ENCODE measurements at regions of chr12 and their contacts with region 1.

Region 1: GRCh38 chr12:92136965-92137721 is 8.5 kb downstream of the BTG1 start:
- DNase-seq: no peak
- H3K4me3 Mint-ChIP-seq: peak overlapping the region; percentile 100
- H3K27ac Mint-ChIP-seq: peak overlapping the region; percentile 91
- H3K4me1 Mint-ChIP-seq: peaks cover 65% of the 10 kb centered on the region
- H3K27me3 Mint-ChIP-seq: no peaks in the 10 kb centered on the region

Region 2: GRCh38 chr12:91778938-91779400 is 358.2 kb before region 1 on chr12:
- CTCF ChIA-PET with region 1: no interaction called
- POLR2A ChIA-PET with region 1: interaction called, 3 read pairs
- intact Hi-C with region 1: loop called (anchors 2 kb)
- DNase-seq: peak; percentile 65
- H3K4me3 Mint-ChIP-seq: peak overlapping the region; percentile 48
- H3K27ac Mint-ChIP-seq: peak overlapping the region; percentile 75
- H3K4me1 Mint-ChIP-seq: peaks cover 27% of the 10 kb centered on the region
- H3K27me3 Mint-ChIP-seq: peaks cover 3% of the 10 kb centered on the region

Region 3: GRCh38 chr12:92034858-92035401 is 102.2 kb before region 1 on chr12:
- CTCF ChIA-PET with region 1: no interaction called
- POLR2A ChIA-PET with region 1: interaction called, 4 read pairs
- intact Hi-C with region 1: loop called (anchors 2 kb)
- DNase-seq: peak; percentile 66
- H3K4me3 Mint-ChIP-seq: peak overlapping the region; percentile 84
- H3K27ac Mint-ChIP-seq: peak overlapping the region; percentile 78
- H3K4me1 Mint-ChIP-seq: peaks cover 83% of the 10 kb centered on the region
- H3K27me3 Mint-ChIP-seq: no peaks in the 10 kb centered on the region

Region 4: GRCh38 chr12:92065018-92065499 is 72.1 kb before region 1 on chr12:
- CTCF ChIA-PET with region 1: no interaction called
- POLR2A ChIA-PET with region 1: interaction called, 3 read pairs
- intact Hi-C with region 1: loop called (anchors 1 kb)
- DNase-seq: peak; percentile 74
- H3K4me3 Mint-ChIP-seq: peak overlapping the region; percentile 59
- H3K27ac Mint-ChIP-seq: peak overlapping the region; percentile 82
- H3K4me1 Mint-ChIP-seq: peaks cover 49% of the 10 kb centered on the region
- H3K27me3 Mint-ChIP-seq: no peaks in the 10 kb centered on the region

Region 5: GRCh38 chr12:92118826-92119536 is 18.2 kb before region 1 on chr12:
- CTCF ChIA-PET with region 1: interaction called, 3 read pairs
- POLR2A ChIA-PET with region 1: interaction called, 3 read pairs
- intact Hi-C with region 1: loop called (anchors 1 kb)
- DNase-seq: no peak
- H3K4me3 Mint-ChIP-seq: no peak overlapping the region
- H3K27ac Mint-ChIP-seq: peak overlapping the region; percentile 73
- H3K4me1 Mint-ChIP-seq: peaks cover 41% of the 10 kb centered on the region
- H3K27me3 Mint-ChIP-seq: no peaks in the 10 kb centered on the region

Region 6: GRCh38 chr12:92158796-92159439 is 21.8 kb after region 1 on chr12:
- CTCF ChIA-PET with region 1: no interaction called
- POLR2A ChIA-PET with region 1: no interaction called
- intact Hi-C with region 1: no loop called
- DNase-seq: no peak
- H3K4me3 Mint-ChIP-seq: peak overlapping the region; percentile 1
- H3K27ac Mint-ChIP-seq: peak overlapping the region; percentile 64
- H3K4me1 Mint-ChIP-seq: peaks cover 39% of the 10 kb centered on the region
- H3K27me3 Mint-ChIP-seq: no peaks in the 10 kb centered on the region

Region 7: GRCh38 chr12:92551853-92552397 is 414.8 kb after region 1 on chr12:
- CTCF ChIA-PET with region 1: no interaction called
- POLR2A ChIA-PET with region 1: interaction called, 3 read pairs
- intact Hi-C with region 1: loop called (anchors 5 kb)
- DNase-seq: peak; percentile 75
- H3K4me3 Mint-ChIP-seq: no peak overlapping the region
- H3K27ac Mint-ChIP-seq: no peak overlapping the region
- H3K4me1 Mint-ChIP-seq: peaks cover 25% of the 10 kb centered on the region
- H3K27me3 Mint-ChIP-seq: no peaks in the 10 kb centered on the region

Measured in activated CD4-positive, alpha-beta memory T cell treated with anti-CD3 and anti-CD28 coated beads for 36 hours (primary cell).